Naive thymus-derived CD4-positive, alpha-beta T cell (primary cell): ENCODE measurements at regions of chr15 and their contacts with region 1.

Region 1: DNA sequence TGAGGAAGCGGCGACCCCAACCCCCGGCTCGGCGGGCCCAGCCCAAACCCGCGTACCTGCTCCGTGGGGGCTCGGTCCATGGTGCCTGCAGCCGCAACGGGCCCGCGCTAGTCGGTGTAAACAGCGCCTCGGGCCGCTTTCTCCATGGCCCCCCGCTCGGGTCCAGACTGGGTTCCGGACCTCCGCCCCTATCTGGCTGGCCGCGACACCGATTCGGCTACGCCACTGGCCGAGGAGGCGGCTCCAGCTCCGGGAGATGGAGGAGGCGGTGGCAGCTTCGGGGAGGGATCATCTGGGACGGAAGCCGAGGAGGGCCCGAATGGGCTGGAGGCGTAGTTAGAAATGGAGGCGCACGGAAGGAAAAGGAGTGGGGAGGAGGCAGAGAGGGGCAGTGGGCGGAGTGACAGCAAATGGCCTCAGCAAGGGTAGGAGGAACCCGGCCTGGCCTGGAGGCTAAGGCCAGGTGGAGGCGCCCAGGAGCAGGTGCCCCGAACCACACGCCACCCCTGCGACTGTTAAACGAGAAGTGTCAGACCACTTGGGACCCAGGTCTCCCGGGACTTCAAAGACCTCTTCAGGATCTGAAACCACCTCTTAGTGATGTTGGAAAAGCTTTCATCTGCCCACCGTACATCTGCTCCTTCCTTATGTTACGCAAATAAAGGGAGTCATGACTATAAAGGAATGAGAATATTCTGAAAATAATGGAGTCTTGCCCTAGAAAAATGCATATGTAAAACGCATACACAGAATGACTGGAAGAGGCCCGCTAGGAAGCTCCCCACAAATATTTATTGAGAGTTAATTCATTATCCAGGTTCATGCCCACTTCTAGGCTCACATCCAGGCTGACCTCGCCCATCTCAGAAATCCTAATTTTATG is at the start of gene SECISBP2L:
- DNase-seq: peak; percentile 73 to 92 (median 91)
- ATAC-seq: peak; percentile 98
- H3K4me3 ChIP-seq: peak within 1 kb of the TSS; percentile 86
- H3K4me3 Mint-ChIP-seq: peak within 1 kb of the TSS; percentile 96 to 99 (median 98)
- H3K27ac ChIP-seq: peak within 1 kb of the TSS; percentile 82
- H3K27ac Mint-ChIP-seq: peak within 1 kb of the TSS; percentile 91 to 97 (median 93)
- H3K4me1 ChIP-seq: peaks cover 16 to 18% of the 10 kb centered on the region in 2 donors
- H3K4me1 Mint-ChIP-seq: peaks cover 23 to 41% (median 34%) of the 10 kb centered on the region in 7 donors
- H3K27me3 ChIP-seq: no peaks in the 10 kb centered on the region
- H3K27me3 Mint-ChIP-seq: no peaks in the 10 kb centered on the region
- total RNA-seq, gene SECISBP2L: 39.3 to 75.8 (median 55.8) TPM

Region 2: GRCh38 chr15:48810414-48811317 is 235.8 kb before region 1 on chr15 and contains the start of gene CEP152:
- CTCF ChIA-PET with region 1: no interaction called
- POLR2A ChIA-PET with region 1: no interaction called
- intact Hi-C with region 1: loop called (anchors 1 kb)
- DNase-seq: peak; percentile 91 to 99 (median 98)
- ATAC-seq: peak; percentile 98
- H3K4me3 ChIP-seq: peak within 1 kb of the TSS; percentile 78
- H3K4me3 Mint-ChIP-seq: peak within 1 kb of the TSS; percentile 82 to 96 (median 89)
- H3K27ac ChIP-seq: peak within 1 kb of the TSS; percentile 76
- H3K27ac Mint-ChIP-seq: peak within 1 kb of the TSS; percentile 14 to 96 (median 87)
- H3K4me1 ChIP-seq: peaks cover 9 to 13% of the 10 kb centered on the region in 2 donors
- H3K4me1 Mint-ChIP-seq: peaks cover 12 to 38% (median 33%) of the 10 kb centered on the region in 7 donors
- H3K27me3 ChIP-seq: no peaks in the 10 kb centered on the region
- H3K27me3 Mint-ChIP-seq: peaks cover 0 to 24% (median 0%) of the 10 kb centered on the region in 5 donors
- total RNA-seq, gene CEP152: 6.2 to 26.3 (median 17.0) TPM

Region 3: DNA sequence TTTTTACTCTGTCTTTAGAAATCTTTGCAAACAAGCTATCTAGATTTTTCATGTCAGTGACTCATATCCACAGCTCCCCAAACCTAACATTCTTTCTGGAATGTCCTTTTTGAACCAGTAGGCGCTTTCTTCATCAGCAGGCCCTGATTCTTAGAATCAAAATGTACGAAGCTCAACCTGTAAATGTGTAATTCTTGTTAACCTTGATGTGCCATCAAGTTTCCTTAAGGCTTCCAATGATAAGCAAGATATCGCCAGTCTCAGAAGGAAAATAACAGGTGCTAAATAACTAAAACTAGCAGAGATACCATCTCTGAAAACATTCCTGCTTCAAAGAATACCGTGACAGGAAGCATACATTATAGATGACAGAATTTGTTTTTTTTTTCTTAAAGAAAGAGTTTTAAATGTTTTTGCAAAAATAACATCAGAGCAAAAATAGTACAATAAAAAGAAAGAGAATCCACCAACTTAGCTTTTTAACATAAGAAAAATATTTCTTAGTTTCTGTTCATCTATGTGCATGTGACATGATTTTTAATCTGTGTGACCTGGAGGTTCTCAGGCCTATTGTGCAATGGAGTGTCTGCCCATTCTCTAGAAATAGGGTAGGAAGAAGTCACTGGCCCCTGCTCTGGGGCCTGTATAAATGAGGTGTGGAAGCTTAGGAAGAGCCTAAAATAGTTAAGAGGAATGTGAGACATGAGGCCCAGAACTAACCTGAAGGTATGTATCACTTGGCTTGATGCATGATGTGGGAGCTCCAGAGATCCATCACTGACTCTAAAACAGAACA is 14.4 kb after region 1 on chr15:
- CTCF ChIA-PET with region 1: interaction called, 10 read pairs
- POLR2A ChIA-PET with region 1: interaction called, 51 read pairs
- intact Hi-C with region 1: loop called in 1 of 2 experiments (anchors 1 kb)
- DNase-seq: peak in 2 of 9 donors; percentile 25 to 35
- ATAC-seq: no peak
- H3K4me3 ChIP-seq: no peak overlapping the region
- H3K4me3 Mint-ChIP-seq: peak overlapping the region in 9 of 10 donors; percentile 13 to 82 (median 71)
- H3K27ac ChIP-seq: peak overlapping the region; percentile 53
- H3K27ac Mint-ChIP-seq: peak overlapping the region; percentile 4 to 97 (median 94)
- H3K4me1 ChIP-seq: peaks cover 0 to 50% of the 10 kb centered on the region in 2 donors
- H3K4me1 Mint-ChIP-seq: peaks cover 4 to 30% (median 21%) of the 10 kb centered on the region in 7 donors
- H3K27me3 ChIP-seq: no peaks in the 10 kb centered on the region
- H3K27me3 Mint-ChIP-seq: peaks cover 0 to 5% (median 0%) of the 10 kb centered on the region in 5 donors

Region 4: GRCh38 chr15:49122541-49123062 is 76.1 kb after region 1 on chr15:
- CTCF ChIA-PET with region 1: no interaction called
- POLR2A ChIA-PET with region 1: no interaction called
- intact Hi-C with region 1: loop called in 1 of 2 experiments (anchors 5 kb)
- DNase-seq: no peak
- ATAC-seq: no peak
- H3K4me3 ChIP-seq: no peak overlapping the region
- H3K4me3 Mint-ChIP-seq: no peak overlapping the region
- H3K27ac ChIP-seq: no peak overlapping the region
- H3K27ac Mint-ChIP-seq: no peak overlapping the region
- H3K4me1 ChIP-seq: no peaks in the 10 kb centered on the region
- H3K4me1 Mint-ChIP-seq: peaks cover 0 to 4% (median 0%) of the 10 kb centered on the region in 7 donors
- H3K27me3 ChIP-seq: no peaks in the 10 kb centered on the region
- H3K27me3 Mint-ChIP-seq: no peaks in the 10 kb centered on the region

Region 5: GRCh38 chr15:49155110-49155833 is 108.8 kb after region 1 on chr15 and contains the start of gene COPS2:
- CTCF ChIA-PET with region 1: interaction called, 5 read pairs
- POLR2A ChIA-PET with region 1: no interaction called
- intact Hi-C with region 1: loop called (anchors 1 kb)
- DNase-seq: peak; percentile 69 to 96 (median 94)
- ATAC-seq: peak; percentile 99
- H3K4me3 ChIP-seq: peak within 1 kb of the TSS; percentile 88
- H3K4me3 Mint-ChIP-seq: peak within 1 kb of the TSS; percentile 95 to 100 (median 98)
- H3K27ac ChIP-seq: peak within 1 kb of the TSS; percentile 93
- H3K27ac Mint-ChIP-seq: peak within 1 kb of the TSS; percentile 93 to 100 (median 97)
- H3K4me1 ChIP-seq: peaks cover 9 to 25% of the 10 kb centered on the region in 2 donors
- H3K4me1 Mint-ChIP-seq: peaks cover 40 to 72% (median 59%) of the 10 kb centered on the region in 7 donors
- H3K27me3 ChIP-seq: no peaks in the 10 kb centered on the region
- H3K27me3 Mint-ChIP-seq: no peaks in the 10 kb centered on the region
- total RNA-seq, gene COPS2: 51.0 to 91.5 (median 63.6) TPM

Region 6: GRCh38 chr15:50182219-50183013 is 1136.0 kb after region 1 on chr15:
- CTCF ChIA-PET with region 1: no interaction called
- POLR2A ChIA-PET with region 1: no interaction called
- intact Hi-C with region 1: loop called in 1 of 2 experiments (anchors 10 kb)
- DNase-seq: peak in 6 of 9 donors; percentile 13 to 65 (median 21)
- ATAC-seq: peak; percentile 56
- H3K4me3 ChIP-seq: peak overlapping the region; percentile 67
- H3K4me3 Mint-ChIP-seq: peak overlapping the region; percentile 82 to 98 (median 90)
- H3K27ac ChIP-seq: no peak overlapping the region
- H3K27ac Mint-ChIP-seq: peak overlapping the region in 3 of 9 donors; percentile 39 to 85 (median 54)
- H3K4me1 ChIP-seq: peaks cover 0 to 6% of the 10 kb centered on the region in 2 donors
- H3K4me1 Mint-ChIP-seq: peaks cover 7 to 56% (median 12%) of the 10 kb centered on the region in 7 donors
- H3K27me3 ChIP-seq: no peaks in the 10 kb centered on the region
- H3K27me3 Mint-ChIP-seq: peaks cover 0 to 53% (median 38%) of the 10 kb centered on the region in 5 donors